Natural killer cell (primary cell): ENCODE measurements at regions of chr18 and their contacts with region 1.

Region 1: DNA sequence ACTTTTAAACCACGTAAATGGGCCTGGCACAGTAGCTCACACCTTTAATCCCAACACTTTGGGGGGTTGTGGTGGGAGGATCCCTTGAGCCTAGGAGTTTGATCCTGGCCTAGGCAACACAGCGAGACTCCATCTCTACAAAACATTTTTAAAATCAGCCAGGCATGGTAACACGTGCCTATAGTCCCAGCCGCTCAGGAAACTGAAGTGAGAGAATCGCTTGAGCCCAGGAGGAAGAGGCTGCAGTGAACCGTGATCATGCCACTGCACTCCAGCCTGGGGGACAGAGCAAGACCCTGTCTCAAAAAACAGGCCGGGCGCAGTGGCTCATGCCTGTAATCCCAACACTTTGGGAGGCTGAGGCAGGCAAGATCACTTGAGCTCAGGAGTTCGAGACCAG is 12.2 kb downstream of the ROCK1 start:
- DNase-seq: no peak
- ATAC-seq: peak; percentile 39 to 61 (median 40)
- H3K4me3 ChIP-seq: no peak overlapping the region
- H3K4me3 Mint-ChIP-seq: peak overlapping the region; percentile 4
- H3K27ac ChIP-seq: no peak overlapping the region
- H3K27ac Mint-ChIP-seq: no peak overlapping the region
- H3K4me1 ChIP-seq: peaks cover 16% of the 10 kb centered on the region
- H3K4me1 Mint-ChIP-seq: peaks cover 72 to 74% of the 10 kb centered on the region in 2 donors
- H3K27me3 ChIP-seq: no peaks in the 10 kb centered on the region
- H3K27me3 Mint-ChIP-seq: no peaks in the 10 kb centered on the region
- CTCF ChIP-seq: no peak

Region 2: GRCh38 chr18:21064347-21064746 is 35.1 kb before region 1 on chr18:
- intact Hi-C with region 1: loop called (anchors 5 kb)
- DNase-seq: no peak
- ATAC-seq: no peak
- H3K4me3 ChIP-seq: no peak overlapping the region
- H3K4me3 Mint-ChIP-seq: no peak overlapping the region
- H3K27ac ChIP-seq: no peak overlapping the region
- H3K27ac Mint-ChIP-seq: peak overlapping the region; percentile 34 to 58
- H3K4me1 ChIP-seq: no peaks in the 10 kb centered on the region
- H3K4me1 Mint-ChIP-seq: peaks cover 43 to 52% of the 10 kb centered on the region in 2 donors
- H3K27me3 ChIP-seq: no peaks in the 10 kb centered on the region
- H3K27me3 Mint-ChIP-seq: no peaks in the 10 kb centered on the region
- CTCF ChIP-seq: no peak